HEK293 (cell line): ENCODE measurements at regions of chr2 and their contacts with region 1.

Region 1: GRCh38 chr2:24421668-24422067 is 61.3 kb upstream of the ITSN2 start:
- H3K4me3 ChIP-seq: no peak overlapping the region
- H3K27ac ChIP-seq: no peak overlapping the region
- H3K4me1 ChIP-seq: no peaks in the 10 kb centered on the region
- CTCF ChIP-seq: no peak

Region 2: DNA sequence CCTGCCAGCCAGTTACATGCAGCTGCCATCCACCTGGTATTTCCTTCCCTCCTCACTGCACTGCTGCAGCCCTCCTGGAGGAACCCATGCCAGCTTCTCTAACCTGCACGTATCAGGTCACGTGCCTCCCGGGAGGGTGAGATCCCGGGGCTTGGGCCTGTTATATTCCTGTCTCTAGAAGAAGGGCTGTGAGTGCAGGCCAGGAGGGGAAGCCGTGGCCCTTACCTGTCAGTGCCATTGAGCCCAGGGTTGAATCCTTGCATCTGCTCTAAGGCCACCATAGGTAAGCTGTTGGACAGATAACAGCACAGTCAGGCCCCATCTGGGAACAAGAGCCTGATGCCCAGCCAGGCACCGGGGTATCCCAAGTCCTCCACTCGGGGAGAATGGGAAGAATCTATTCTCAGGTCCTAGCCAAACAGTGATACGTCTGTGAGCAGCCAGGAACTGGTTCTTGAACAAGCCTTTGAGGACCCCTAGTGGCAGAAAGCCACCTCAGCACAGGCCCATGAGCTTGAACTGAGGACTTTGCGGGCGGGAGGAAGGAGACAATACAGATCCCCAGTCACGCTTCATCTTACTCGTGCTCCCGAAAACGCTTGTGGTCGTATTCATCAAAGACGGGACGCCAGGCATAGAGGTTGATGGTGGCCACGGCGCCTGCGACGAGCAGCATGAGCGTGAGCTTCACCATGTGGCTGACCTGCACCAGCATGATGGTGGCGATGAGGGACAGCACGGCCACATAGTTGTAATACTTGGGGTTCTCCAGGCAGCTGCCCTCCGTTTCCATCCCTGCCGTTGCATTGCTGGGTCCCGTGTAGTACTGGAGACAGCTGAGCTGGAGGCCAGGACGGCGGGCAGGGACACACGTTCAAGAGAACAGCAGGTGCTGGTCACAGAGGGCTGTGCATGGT is 405.9 kb after region 1 on chr2:
- CTCF ChIA-PET with region 1: interaction called, 26 read pairs
- POLR2A ChIA-PET with region 1: no interaction called
- H3K4me3 ChIP-seq: no peak overlapping the region
- H3K27ac ChIP-seq: no peak overlapping the region
- H3K4me1 ChIP-seq: no peaks in the 10 kb centered on the region
- CTCF ChIP-seq: peak; percentile 81